Activated CD4-positive, alpha-beta memory T cell treated with anti-CD3 and anti-CD28 coated beads for 36 hours (primary cell): ENCODE measurements at regions of chr2 and their contacts with region 1.

Region 1: GRCh38 chr2:232550354-232551249 is at the starts of genes EIF4E2 and TIGD1:
- DNase-seq: peak; percentile 95
- H3K4me3 Mint-ChIP-seq: peak within 1 kb of the TSS; percentile 97
- H3K27ac Mint-ChIP-seq: peak within 1 kb of the TSS; percentile 97
- H3K4me1 Mint-ChIP-seq: peaks cover 65% of the 10 kb centered on the region
- H3K27me3 Mint-ChIP-seq: no peaks in the 10 kb centered on the region
- total RNA-seq, gene EIF4E2: 51.7 to 55.7 TPM
- total RNA-seq, gene TIGD1: 5.8 to 7.2 TPM

Region 2: GRCh38 chr2:231780909-231781797 is 769.4 kb before region 1 on chr2 and contains the start of gene PDE6D:
- CTCF ChIA-PET with region 1: no interaction called
- POLR2A ChIA-PET with region 1: no interaction called
- intact Hi-C with region 1: loop called (anchors 10 kb)
- DNase-seq: peak; percentile 98
- H3K4me3 Mint-ChIP-seq: peak within 1 kb of the TSS; percentile 89
- H3K27ac Mint-ChIP-seq: peak within 1 kb of the TSS; percentile 94
- H3K4me1 Mint-ChIP-seq: peaks cover 52% of the 10 kb centered on the region
- H3K27me3 Mint-ChIP-seq: no peaks in the 10 kb centered on the region
- total RNA-seq, gene PDE6D: 29.5 to 31.1 TPM

Region 3: GRCh38 chr2:232697100-232697865 is 146.7 kb after region 1 on chr2 and contains the start of gene GIGYF2:
- CTCF ChIA-PET with region 1: no interaction called
- POLR2A ChIA-PET with region 1: interaction called, 4 read pairs
- intact Hi-C with region 1: loop called (anchors 1 kb)
- DNase-seq: peak; percentile 98
- H3K4me3 Mint-ChIP-seq: peak within 1 kb of the TSS; percentile 89
- H3K27ac Mint-ChIP-seq: peak within 1 kb of the TSS; percentile 73
- H3K4me1 Mint-ChIP-seq: peaks cover 34% of the 10 kb centered on the region
- H3K27me3 Mint-ChIP-seq: no peaks in the 10 kb centered on the region
- total RNA-seq, gene GIGYF2: 50.0 to 51.4 TPM